H1 (cell line): ENCODE measurements at regions of chr3 and their contacts with region 1.

Region 1: DNA sequence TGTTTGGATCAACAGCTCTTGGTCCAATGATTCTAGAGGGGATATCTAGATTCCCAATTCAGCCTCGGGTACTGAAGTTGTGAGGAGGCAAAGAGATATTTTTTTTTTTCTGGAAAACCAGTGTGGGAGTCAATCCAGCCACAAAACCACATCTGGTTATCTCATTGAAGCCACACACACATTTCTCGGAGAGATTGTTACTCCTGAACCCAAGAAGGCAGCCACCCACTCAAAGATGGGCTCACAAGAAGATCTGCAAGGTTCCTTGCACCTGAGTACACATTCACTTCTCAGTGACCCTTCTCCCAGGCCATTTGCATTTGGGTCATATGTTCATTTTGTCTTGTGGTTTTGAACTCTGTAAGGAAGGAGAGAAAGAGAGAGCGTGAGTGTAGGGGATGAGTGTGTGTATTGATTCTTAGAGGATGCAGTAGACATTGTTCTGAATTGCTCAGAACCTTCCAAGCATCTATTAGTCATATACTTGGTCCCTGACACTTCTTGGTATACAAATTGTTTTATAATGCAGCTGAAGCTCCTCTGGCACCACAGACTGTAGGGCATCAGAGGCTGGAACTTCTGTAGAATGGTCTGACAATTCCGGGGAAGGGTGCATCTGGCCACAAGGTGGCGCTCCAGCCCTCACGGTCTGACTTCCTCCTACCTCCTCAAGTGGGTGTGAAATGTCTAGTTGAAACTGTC is 39.3 kb upstream of the TRA2B start:
- DNase-seq: peak; percentile 41 to 93
- H3K4me3 ChIP-seq: no peak overlapping the region
- H3K27ac ChIP-seq: no peak overlapping the region
- H3K4me1 ChIP-seq: no peaks in the 10 kb centered on the region
- H3K27me3 ChIP-seq: no peaks in the 10 kb centered on the region
- CTCF ChIP-seq: peak; percentile 90 to 99 (median 97)
- EP300 ChIP-seq: no peak
- POLR2A ChIP-seq: no peak
- RAD21 ChIP-seq: peak; percentile 79 to 82

Region 2: GRCh38 chr3:185887066-185887465 is 90.1 kb before region 1 on chr3:
- CTCF ChIA-PET with region 1: no interaction called
- POLR2A ChIA-PET with region 1: no interaction called
- DNase-seq: no peak
- H3K4me3 ChIP-seq: no peak overlapping the region
- H3K27ac ChIP-seq: no peak overlapping the region
- H3K4me1 ChIP-seq: no peaks in the 10 kb centered on the region
- H3K27me3 ChIP-seq: no peaks in the 10 kb centered on the region
- CTCF ChIP-seq: no peak
- EP300 ChIP-seq: no peak
- POLR2A ChIP-seq: no peak
- RAD21 ChIP-seq: no peak

Region 3: DNA sequence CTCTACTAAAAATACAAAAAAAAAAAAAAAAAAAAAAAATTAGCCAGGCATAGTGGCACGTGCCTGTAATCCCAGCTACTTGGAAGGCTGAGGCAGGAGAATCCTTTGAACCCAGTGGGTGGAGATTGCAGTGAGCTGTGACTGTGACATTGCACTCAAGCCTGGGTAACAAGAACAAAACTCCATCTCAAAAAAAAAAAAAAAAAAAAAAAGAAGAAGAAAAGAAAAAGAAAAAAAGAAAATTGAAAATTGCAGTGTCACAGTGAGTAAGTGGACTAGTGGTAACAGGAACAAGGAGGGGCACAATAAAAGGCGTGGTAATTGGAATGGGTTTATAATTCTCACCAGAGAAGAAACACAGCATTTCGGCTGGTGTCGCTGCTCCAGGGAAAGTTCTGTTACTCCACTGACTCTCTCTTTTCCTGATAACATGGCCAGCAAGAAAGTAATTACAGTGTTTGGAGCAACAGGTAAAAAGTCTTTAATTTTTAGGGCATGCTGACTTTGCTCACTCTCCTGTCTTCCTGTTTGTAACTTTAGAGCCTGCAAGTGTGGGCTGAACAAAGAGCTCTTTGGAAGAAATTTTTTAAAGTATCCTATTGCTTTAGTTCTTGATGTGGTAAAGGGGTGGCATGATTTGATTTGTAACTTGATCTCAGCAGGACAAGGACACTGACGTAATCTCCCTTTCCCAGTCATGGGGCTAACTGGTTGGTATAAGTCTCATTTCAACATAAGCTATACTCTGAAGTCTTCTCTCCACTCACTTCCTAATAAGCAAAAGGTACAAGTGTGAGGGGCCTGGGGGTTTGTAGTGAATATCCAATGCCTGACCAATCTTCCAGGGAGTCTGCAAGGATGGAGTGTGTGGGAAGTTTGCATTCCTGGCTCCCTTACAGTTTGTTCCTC is 17.3 kb before region 1 on chr3:
- CTCF ChIA-PET with region 1: interaction called, 12 read pairs
- POLR2A ChIA-PET with region 1: no interaction called
- DNase-seq: no peak
- H3K4me3 ChIP-seq: no peak overlapping the region
- H3K27ac ChIP-seq: no peak overlapping the region
- H3K4me1 ChIP-seq: peaks cover 0 to 4% (median 0%) of the 10 kb centered on the region in 4 experiments; a peak in 1 of 7 replicates
- H3K27me3 ChIP-seq: no peaks in the 10 kb centered on the region
- CTCF ChIP-seq: no peak
- EP300 ChIP-seq: no peak
- POLR2A ChIP-seq: no peak
- RAD21 ChIP-seq: no peak

Region 4: GRCh38 chr3:186277268-186277909 is 300.3 kb after region 1 on chr3:
- CTCF ChIA-PET with region 1: interaction called, 12 read pairs
- POLR2A ChIA-PET with region 1: no interaction called
- DNase-seq: no peak
- H3K4me3 ChIP-seq: no peak overlapping the region
- H3K27ac ChIP-seq: no peak overlapping the region
- H3K4me1 ChIP-seq: no peaks in the 10 kb centered on the region
- H3K27me3 ChIP-seq: no peaks in the 10 kb centered on the region
- CTCF ChIP-seq: peak; percentile 53 to 72 (median 67)
- EP300 ChIP-seq: no peak
- POLR2A ChIP-seq: no peak
- RAD21 ChIP-seq: peak; percentile 86 to 92